Activated T-helper 2 cell treated with anti-CD3 and anti-CD28 coated beads, Interferon-gamma antibody, Interleukin-2, Interleukin-4, amounts not matched to agents 10 μg/mL and 5 μg/mL and 100 μg/mL, durations not matched to agents 14 hours and 24 hours and 36 hours (primary cell): ENCODE measurements at regions of chr7 and their contacts with region 1.

Region 1: DNA sequence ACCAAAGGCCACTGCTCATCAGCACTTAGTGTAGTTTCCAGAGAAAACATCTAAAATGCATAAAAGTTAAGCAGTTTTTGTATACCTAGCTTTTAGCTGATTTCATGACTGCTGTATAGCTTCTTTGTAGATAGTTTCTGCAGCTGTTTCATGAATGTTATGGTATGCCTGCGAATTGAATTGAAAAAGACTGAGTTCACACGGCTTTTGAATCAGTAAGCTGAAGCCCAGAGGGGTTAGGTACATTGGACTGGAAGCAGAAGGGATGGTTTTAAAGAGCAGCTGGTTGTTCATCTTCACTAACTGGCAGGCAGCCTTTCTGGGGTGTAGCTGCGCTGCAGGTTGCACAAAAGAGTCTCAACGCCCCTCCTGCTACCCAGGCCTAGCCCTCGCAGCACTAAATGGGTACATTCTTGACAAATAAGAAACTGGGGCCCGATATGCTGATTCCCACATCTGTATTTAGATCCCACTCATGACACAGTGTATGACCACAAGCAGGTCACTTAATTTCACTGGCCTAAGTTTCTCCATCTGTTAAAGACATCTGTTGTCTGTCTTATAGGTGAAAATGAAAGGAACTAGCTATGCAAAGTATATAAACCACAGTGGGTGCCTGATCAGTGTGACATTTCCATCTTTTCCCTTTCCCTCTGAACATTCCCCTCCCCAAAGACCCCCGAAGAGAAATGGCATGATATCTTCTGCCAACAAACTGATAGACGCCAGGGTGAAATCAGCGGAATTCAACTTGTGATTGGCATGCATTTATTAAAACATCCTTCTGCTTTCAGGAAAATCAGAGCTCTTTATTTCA is 85.9 kb upstream of the AGBL3 start:
- DNase-seq: no peak
- H3K4me3 Mint-ChIP-seq: no peak overlapping the region
- H3K27ac Mint-ChIP-seq: no peak overlapping the region
- H3K4me1 Mint-ChIP-seq: peaks cover 18% of the 10 kb centered on the region
- H3K27me3 Mint-ChIP-seq: no peaks in the 10 kb centered on the region

Region 2: GRCh38 chr7:134831862-134832261 is 68.5 kb before region 1 on chr7:
- intact Hi-C with region 1: no loop called
- DNase-seq: no peak
- H3K4me3 Mint-ChIP-seq: no peak overlapping the region
- H3K27ac Mint-ChIP-seq: no peak overlapping the region
- H3K4me1 Mint-ChIP-seq: no peaks in the 10 kb centered on the region
- H3K27me3 Mint-ChIP-seq: no peaks in the 10 kb centered on the region

Region 3: GRCh38 chr7:134865001-134865845 is 35.2 kb before region 1 on chr7:
- intact Hi-C with region 1: loop called (anchors 5 kb)
- DNase-seq: peak; percentile 24
- H3K4me3 Mint-ChIP-seq: peak overlapping the region; percentile 23
- H3K27ac Mint-ChIP-seq: peak overlapping the region; percentile 53
- H3K4me1 Mint-ChIP-seq: peaks cover 15% of the 10 kb centered on the region
- H3K27me3 Mint-ChIP-seq: no peaks in the 10 kb centered on the region